ENCODE measurements at regions of chr12 and their contacts with region 1.

Region 1: GRCh38 chr12:39619660-39620433 is at the start of gene ABCD2:
- DNase-seq: peak; percentile 88
- H3K4me3 Mint-ChIP-seq: no peak within 1 kb of the TSS
- H3K27ac Mint-ChIP-seq: no peak within 1 kb of the TSS
- H3K4me1 Mint-ChIP-seq: peaks cover 27% of the 10 kb centered on the region
- H3K27me3 Mint-ChIP-seq: no peaks in the 10 kb centered on the region
- total RNA-seq, gene ABCD2: 8.6 to 9.1 TPM

Region 2: GRCh38 chr12:38906482-38907170 is 713.2 kb before region 1 on chr12:
- CTCF ChIA-PET with region 1: no interaction called
- intact Hi-C with region 1: loop called (anchors 10 kb)
- DNase-seq: peak; percentile 76
- H3K4me3 Mint-ChIP-seq: peak overlapping the region; percentile 83
- H3K27ac Mint-ChIP-seq: peak overlapping the region; percentile 86
- H3K4me1 Mint-ChIP-seq: peaks cover 22% of the 10 kb centered on the region
- H3K27me3 Mint-ChIP-seq: peaks cover 31% of the 10 kb centered on the region

Region 3: DNA sequence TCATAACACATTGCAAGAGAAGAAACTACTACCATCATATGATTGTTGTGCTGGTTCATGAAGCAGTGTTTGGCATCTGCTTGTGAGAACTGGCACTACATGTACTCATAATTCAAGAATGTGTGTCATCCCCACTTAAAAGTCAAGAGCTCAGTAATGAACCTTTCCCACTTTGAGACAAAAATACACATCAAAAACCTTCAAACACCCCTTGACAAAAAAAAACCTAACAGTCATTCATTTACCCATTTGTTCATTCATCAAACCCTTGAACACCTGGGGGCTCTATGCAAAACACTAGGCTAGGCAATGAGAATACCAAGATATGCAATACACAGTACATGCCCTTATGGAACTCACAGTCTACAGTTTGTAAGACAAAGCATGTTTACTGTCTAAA is 216.9 kb before region 1 on chr12:
- CTCF ChIA-PET with region 1: interaction called, 5 read pairs
- intact Hi-C with region 1: loop called (anchors 1 kb)
- DNase-seq: peak; percentile 18
- H3K4me3 Mint-ChIP-seq: no peak overlapping the region
- H3K27ac Mint-ChIP-seq: no peak overlapping the region
- H3K4me1 Mint-ChIP-seq: peaks cover 15% of the 10 kb centered on the region
- H3K27me3 Mint-ChIP-seq: no peaks in the 10 kb centered on the region

Region 4: GRCh38 chr12:39587225-39587624 is 32.6 kb before region 1 on chr12:
- CTCF ChIA-PET with region 1: interaction called, 7 read pairs
- intact Hi-C with region 1: loop called (anchors 1 kb)
- DNase-seq: peak; percentile 38
- H3K4me3 Mint-ChIP-seq: no peak overlapping the region
- H3K27ac Mint-ChIP-seq: no peak overlapping the region
- H3K4me1 Mint-ChIP-seq: peaks cover 12% of the 10 kb centered on the region
- H3K27me3 Mint-ChIP-seq: no peaks in the 10 kb centered on the region

Region 5: DNA sequence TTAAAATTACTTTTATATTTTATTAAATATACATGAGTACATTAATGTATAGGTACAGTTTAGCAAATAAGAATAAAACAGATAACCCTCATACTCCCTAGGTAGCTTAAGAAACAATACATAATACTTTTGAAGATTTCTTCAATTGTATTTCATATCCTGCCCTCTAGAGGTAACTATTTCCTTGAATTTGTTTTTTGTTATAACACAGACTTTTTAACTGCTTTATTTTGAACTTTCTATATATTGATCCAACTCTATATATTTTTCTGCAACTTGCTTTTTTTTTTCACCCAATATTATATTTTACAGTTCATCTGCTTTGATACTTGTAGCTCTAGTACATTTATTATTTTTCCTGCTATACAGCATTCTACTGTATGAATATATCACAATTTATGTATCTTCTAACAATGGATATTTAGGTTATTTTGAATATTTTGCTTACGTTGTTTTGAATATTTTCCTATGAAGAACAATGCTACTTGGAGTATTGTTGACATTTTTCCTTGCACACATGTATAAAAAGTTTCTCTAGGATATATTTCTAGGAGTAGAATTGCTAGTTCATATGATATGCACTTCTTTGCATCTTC is 72.5 kb after region 1 on chr12:
- CTCF ChIA-PET with region 1: interaction called, 7 read pairs
- intact Hi-C with region 1: loop called (anchors 1 kb)
- DNase-seq: no peak
- H3K4me3 Mint-ChIP-seq: no peak overlapping the region
- H3K27ac Mint-ChIP-seq: no peak overlapping the region
- H3K4me1 Mint-ChIP-seq: peaks cover 1% of the 10 kb centered on the region
- H3K27me3 Mint-ChIP-seq: no peaks in the 10 kb centered on the region

Region 6: GRCh38 chr12:39736406-39736805 is 116.6 kb after region 1 on chr12:
- CTCF ChIA-PET with region 1: no interaction called
- intact Hi-C with region 1: no loop called
- DNase-seq: no peak
- H3K4me3 Mint-ChIP-seq: no peak overlapping the region
- H3K27ac Mint-ChIP-seq: no peak overlapping the region
- H3K4me1 Mint-ChIP-seq: no peaks in the 10 kb centered on the region
- H3K27me3 Mint-ChIP-seq: no peaks in the 10 kb centered on the region